HEK293T (cell line): ENCODE measurements at regions of chr17 and their contacts with region 1.

Region 1: GRCh38 chr17:58631523-58632323 is 60.1 kb downstream of the TEX14 start:
- DNase-seq: peak; percentile 89

Region 2: DNA sequence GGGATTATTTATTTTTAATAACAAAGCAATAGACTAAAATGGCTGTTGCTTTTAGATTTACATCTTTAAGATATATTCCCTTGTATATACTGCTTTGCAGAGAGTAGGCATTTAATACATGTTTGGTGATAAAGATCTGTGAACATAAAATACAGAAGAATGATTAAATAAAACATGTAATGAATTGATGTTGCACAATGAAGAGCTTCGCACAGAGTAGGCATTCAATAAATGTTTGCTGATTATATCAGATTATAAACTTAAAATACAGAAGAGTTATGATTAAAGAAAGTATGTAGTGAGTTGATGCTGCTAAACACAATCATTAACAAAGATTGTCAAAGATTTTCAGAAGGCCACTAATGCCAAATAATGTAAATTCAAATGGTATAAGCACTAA is 167.9 kb before region 1 on chr17:
- CTCF ChIA-PET with region 1: no interaction called
- POLR2A ChIA-PET with region 1: no interaction called
- DNase-seq: no peak

Region 3: GRCh38 chr17:58587702-58588254 is 43.9 kb before region 1 on chr17:
- CTCF ChIA-PET with region 1: interaction called, 5 read pairs
- POLR2A ChIA-PET with region 1: interaction called, 23 read pairs
- DNase-seq: peak; percentile 83

Region 4: GRCh38 chr17:58615768-58616659 is 15.7 kb before region 1 on chr17:
- CTCF ChIA-PET with region 1: interaction called, 5 read pairs
- POLR2A ChIA-PET with region 1: interaction called, 29 read pairs
- DNase-seq: no peak

Region 5: DNA sequence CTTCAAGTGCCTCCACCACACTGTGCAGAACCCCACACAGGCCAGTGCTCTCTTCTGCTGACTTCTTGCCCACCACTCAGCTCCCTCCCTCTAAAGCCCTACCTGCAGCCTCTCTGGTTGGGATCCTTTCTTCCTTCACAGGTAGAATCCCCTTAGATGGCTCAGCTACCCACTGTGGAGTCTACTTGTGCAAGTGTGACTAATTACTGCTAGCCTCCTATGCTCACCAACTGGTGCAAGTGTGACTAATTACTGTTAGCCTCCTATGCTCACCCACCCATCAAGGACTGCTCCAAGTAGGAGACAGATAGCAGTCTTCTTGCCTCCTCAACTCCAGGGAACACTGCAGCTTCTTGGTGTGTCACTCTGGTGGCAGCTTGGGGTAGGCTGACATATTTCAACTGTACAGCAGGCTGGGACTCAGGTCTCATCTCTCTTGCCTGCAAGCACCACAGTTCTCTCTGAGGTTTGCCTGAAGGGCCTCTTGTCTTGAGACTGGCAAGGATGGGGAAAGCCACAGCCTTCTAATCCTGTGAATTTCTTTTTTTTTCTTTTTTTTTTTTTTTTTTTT is 16.6 kb after region 1 on chr17:
- CTCF ChIA-PET with region 1: no interaction called
- POLR2A ChIA-PET with region 1: interaction called, 35 read pairs
- DNase-seq: no peak

Region 6: GRCh38 chr17:58686980-58687379 is 55.3 kb after region 1 on chr17:
- CTCF ChIA-PET with region 1: no interaction called
- POLR2A ChIA-PET with region 1: interaction called, 59 read pairs
- DNase-seq: no peak